ENCODE measurements at regions of chr11 and their contacts with region 1.

Region 1: GRCh38 chr11:22416462-22416861 is 78.3 kb downstream of the SLC17A6 start:
- DNase-seq: no peak
- H3K4me3 ChIP-seq: no peak overlapping the region
- H3K27ac ChIP-seq: no peak overlapping the region
- H3K4me1 ChIP-seq: no peaks in the 10 kb centered on the region
- H3K27me3 ChIP-seq: no peaks in the 10 kb centered on the region
- CTCF ChIP-seq: no peak
- POLR2A ChIP-seq: no peak

Region 2: GRCh38 chr11:22430141-22430541 is 13.7 kb after region 1 on chr11:
- intact Hi-C with region 1: loop called (anchors 1 kb)
- DNase-seq: no peak
- H3K4me3 ChIP-seq: no peak overlapping the region
- H3K27ac ChIP-seq: no peak overlapping the region
- H3K4me1 ChIP-seq: no peaks in the 10 kb centered on the region
- H3K27me3 ChIP-seq: peaks cover 0 to 8% of the 10 kb centered on the region in 2 donors
- CTCF ChIP-seq: no peak
- POLR2A ChIP-seq: no peak

Measured in breast epithelium (tissue), 4 donors.